K562 (cell line): ENCODE measurements at regions of chr2 and their contacts with region 1.

Region 1: GRCh38 chr2:197777823-197778407 is 7.2 kb downstream of the BOLL start:
- DNase-seq: peak in 3 of 4 experiments; percentile 7 to 42 (median 13)
- ATAC-seq: no peak
- H3K4me3 ChIP-seq: no peak overlapping the region
- H3K27ac ChIP-seq: no peak overlapping the region
- H3K4me1 ChIP-seq: no peaks in the 10 kb centered on the region; a peak in 1 of 5 replicates
- H3K27me3 ChIP-seq: no peaks in the 10 kb centered on the region
- CTCF ChIP-seq: peak in 2 of 3 experiments; percentile 44 to 70; a peak in 3 of 6 replicates
- EP300 ChIP-seq: no peak
- POLR2A ChIP-seq: no peak
- RAD21 ChIP-seq: peak; percentile 82 to 85

Region 2: GRCh38 chr2:197113275-197113711 is 664.6 kb before region 1 on chr2:
- CTCF ChIA-PET with region 1: interaction called, 3 read pairs
- POLR2A ChIA-PET with region 1: no interaction called
- in situ Hi-C with region 1: no loop called
- intact Hi-C with region 1: loop called (anchors 10 kb)
- DNase-seq: peak; percentile 7 to 11 (median 9)
- ATAC-seq: no peak
- H3K4me3 ChIP-seq: no peak overlapping the region
- H3K27ac ChIP-seq: no peak overlapping the region
- H3K4me1 ChIP-seq: no peaks in the 10 kb centered on the region
- H3K27me3 ChIP-seq: no peaks in the 10 kb centered on the region
- CTCF ChIP-seq: peak in 2 of 3 experiments; percentile 24 to 65; a peak in 4 of 6 replicates
- EP300 ChIP-seq: no peak
- POLR2A ChIP-seq: no peak
- RAD21 ChIP-seq: peak; percentile 53 to 62

Region 3: DNA sequence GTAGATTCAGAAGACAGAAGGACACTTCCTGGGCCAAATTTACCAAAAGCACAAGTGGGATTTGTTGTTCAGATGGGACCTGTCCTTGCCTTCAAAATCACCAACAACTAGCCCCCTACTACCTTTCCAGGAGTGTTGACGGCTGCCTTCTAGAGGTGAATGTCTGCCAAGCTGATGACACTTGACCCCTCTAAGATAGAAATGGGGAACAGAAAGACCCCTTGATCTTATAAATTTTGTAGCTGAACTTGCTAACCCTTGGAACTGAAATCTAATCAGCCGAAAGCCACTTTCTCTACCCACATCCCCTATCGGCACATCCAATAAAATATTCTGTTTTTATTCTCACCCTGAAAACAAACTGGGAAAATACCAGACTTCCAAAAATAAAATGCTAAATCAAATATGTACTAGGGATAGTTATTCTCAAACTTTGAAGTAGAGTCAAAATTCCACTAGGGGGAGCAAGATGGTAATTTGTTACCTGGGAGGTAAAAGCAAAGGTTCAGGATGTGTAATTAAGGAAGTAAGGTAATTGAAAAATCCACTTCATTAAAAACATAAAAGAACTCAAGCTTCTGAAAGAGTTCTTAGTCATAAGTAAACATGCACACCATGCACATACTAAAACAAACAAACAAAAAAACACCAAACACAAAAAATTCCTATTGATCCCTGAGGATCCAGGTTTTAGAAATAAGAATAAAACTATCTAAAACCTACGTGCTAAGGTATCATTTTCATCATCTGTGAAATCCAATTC is 586.6 kb before region 1 on chr2:
- CTCF ChIA-PET with region 1: interaction called, 3 read pairs
- POLR2A ChIA-PET with region 1: no interaction called
- in situ Hi-C with region 1: no loop called
- intact Hi-C with region 1: loop called (anchors 5 kb)
- DNase-seq: peak; percentile 26 to 35 (median 28)
- ATAC-seq: 0 out of 3 replicates have a peak, but pooled peaks have one; percentile 56
- H3K4me3 ChIP-seq: no peak overlapping the region
- H3K27ac ChIP-seq: no peak overlapping the region
- H3K4me1 ChIP-seq: no peaks in the 10 kb centered on the region
- H3K27me3 ChIP-seq: no peaks in the 10 kb centered on the region
- CTCF ChIP-seq: peak in 2 of 3 experiments; percentile 39 to 68; a peak in 4 of 6 replicates
- EP300 ChIP-seq: no peak
- POLR2A ChIP-seq: no peak
- RAD21 ChIP-seq: peak; percentile 69 to 76

Region 4: DNA sequence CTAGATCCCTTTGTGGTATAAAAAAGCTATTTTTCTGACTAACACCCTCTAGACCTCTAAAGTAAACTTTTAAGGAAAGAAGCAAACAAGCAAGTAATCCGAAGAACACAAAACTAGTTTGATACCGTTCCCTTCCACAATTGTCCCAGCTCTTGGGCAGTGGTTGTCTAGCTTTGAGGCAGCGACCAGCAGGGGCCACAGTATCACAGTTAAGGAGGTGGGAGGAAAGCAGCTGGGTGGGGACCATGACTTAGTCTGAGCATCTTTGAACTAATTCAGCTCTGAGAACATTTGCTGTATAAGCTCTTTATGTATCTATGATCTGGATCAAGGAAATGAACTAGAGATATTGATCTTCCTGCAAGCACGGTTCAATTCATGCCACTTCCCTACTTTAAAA is 394.1 kb before region 1 on chr2:
- CTCF ChIA-PET with region 1: no interaction called
- POLR2A ChIA-PET with region 1: no interaction called
- in situ Hi-C with region 1: loop called (anchors 25 kb)
- intact Hi-C with region 1: loop called (anchors 5 kb)
- DNase-seq: peak in 2 of 4 experiments; percentile 8 to 18
- ATAC-seq: peak; percentile 81
- H3K4me3 ChIP-seq: no peak overlapping the region
- H3K27ac ChIP-seq: no peak overlapping the region
- H3K4me1 ChIP-seq: no peaks in the 10 kb centered on the region; a peak in 1 of 5 replicates
- H3K27me3 ChIP-seq: peaks cover 5 to 15% of the 10 kb centered on the region in 2 experiments; a peak in 3 of 5 replicates
- CTCF ChIP-seq: peak in 2 of 3 experiments; percentile 11 to 23; a peak in 3 of 6 replicates
- EP300 ChIP-seq: no peak
- POLR2A ChIP-seq: no peak
- RAD21 ChIP-seq: peak in 1 of 2 experiments; percentile 38; a peak in 2 of 4 replicates

Region 5: DNA sequence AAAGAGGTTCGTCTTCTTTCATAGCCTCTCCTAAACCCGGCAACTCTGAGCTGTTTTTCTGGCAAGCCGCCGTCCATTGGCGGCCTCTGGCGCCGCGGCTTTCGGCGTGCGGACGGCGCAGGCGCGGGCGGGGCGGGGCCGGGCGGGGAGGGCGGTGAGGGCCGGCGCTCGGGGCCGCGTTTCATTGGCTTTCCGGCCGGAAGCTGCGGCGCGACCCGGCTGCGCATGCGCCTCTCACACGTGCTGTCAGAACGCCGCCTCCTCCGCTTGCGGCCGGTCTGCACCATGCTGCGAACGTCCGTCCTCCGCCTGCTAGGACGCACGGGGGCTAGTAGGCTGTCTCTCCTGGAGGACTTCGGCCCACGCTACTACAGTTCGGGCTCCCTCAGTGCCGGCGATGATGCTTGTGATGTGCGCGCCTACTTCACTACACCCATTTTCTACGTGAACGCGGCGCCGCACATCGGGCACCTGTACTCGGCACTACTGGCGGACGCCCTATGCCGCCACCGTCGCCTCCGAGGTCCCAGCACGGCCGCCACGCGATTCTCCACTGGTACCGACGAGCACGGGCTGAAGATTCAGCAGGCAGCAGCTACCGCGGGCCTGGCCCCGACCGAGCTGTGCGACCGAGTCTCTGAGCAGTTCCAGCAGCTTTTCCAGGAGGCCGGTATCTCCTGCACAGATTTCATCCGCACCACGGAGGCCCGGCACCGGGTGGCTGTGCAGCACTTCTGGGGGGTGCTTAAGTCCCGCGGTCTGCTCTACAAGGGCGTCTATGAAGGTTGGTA is 72.6 kb before region 1 on chr2 and contains the start of gene MARS2:
- CTCF ChIA-PET with region 1: interaction called, 6 read pairs
- POLR2A ChIA-PET with region 1: no interaction called
- in situ Hi-C with region 1: no loop called
- intact Hi-C with region 1: loop called (anchors 1 kb)
- DNase-seq: peak; percentile 87 to 93 (median 90)
- ATAC-seq: peak; percentile 87
- H3K4me3 ChIP-seq: peak within 1 kb of the TSS; percentile 88
- H3K27ac ChIP-seq: peak within 1 kb of the TSS; percentile 72
- H3K4me1 ChIP-seq: peaks cover 5 to 12% of the 10 kb centered on the region in 2 experiments; a peak in 4 of 5 replicates
- H3K27me3 ChIP-seq: no peaks in the 10 kb centered on the region
- CTCF ChIP-seq: no peak
- EP300 ChIP-seq: no peak
- POLR2A ChIP-seq: peak; percentile 83
- RAD21 ChIP-seq: no peak
- polyA plus RNA-seq, gene MARS2: 4.0 to 6.9 TPM

Region 6: GRCh38 chr2:197728338-197729207 is 49.3 kb before region 1 on chr2:
- CTCF ChIA-PET with region 1: no interaction called
- POLR2A ChIA-PET with region 1: no interaction called
- in situ Hi-C with region 1: no loop called
- intact Hi-C with region 1: loop called (anchors 5 kb)
- DNase-seq: peak in 1 of 4 experiments; percentile 48
- ATAC-seq: peak; percentile 90
- H3K4me3 ChIP-seq: peak overlapping the region; percentile 34
- H3K27ac ChIP-seq: peak overlapping the region; percentile 83
- H3K4me1 ChIP-seq: no peaks in the 10 kb centered on the region; a peak in 1 of 5 replicates
- H3K27me3 ChIP-seq: no peaks in the 10 kb centered on the region
- CTCF ChIP-seq: no peak
- EP300 ChIP-seq: no peak
- POLR2A ChIP-seq: peak; percentile 76
- RAD21 ChIP-seq: no peak